ENCODE measurements at regions of chr17 and their contacts with region 1.

Region 1: GRCh38 chr17:63434876-63435684 is 11.0 kb downstream of the CYB561 start:
- DNase-seq: peak in 11 of 14 experiments; percentile 29 to 80 (median 43)
- ATAC-seq: peak; percentile 92
- H3K4me3 ChIP-seq: no peak overlapping the region
- H3K4me3 Mint-ChIP-seq: peak overlapping the region; percentile 60
- H3K27ac ChIP-seq: no peak overlapping the region
- H3K27ac Mint-ChIP-seq: peak overlapping the region; percentile 76
- H3K4me1 ChIP-seq: peaks cover 65% of the 10 kb centered on the region
- H3K4me1 Mint-ChIP-seq: peaks cover 19% of the 10 kb centered on the region
- H3K27me3 ChIP-seq: no peaks in the 10 kb centered on the region
- H3K27me3 Mint-ChIP-seq: no peaks in the 10 kb centered on the region
- CTCF ChIP-seq: no peak

Region 2: GRCh38 chr17:63349478-63350000 is 85.5 kb before region 1 on chr17:
- CTCF ChIA-PET with region 1: no interaction called
- POLR2A ChIA-PET with region 1: no interaction called
- intact Hi-C with region 1: no loop called
- DNase-seq: no peak
- ATAC-seq: no peak
- H3K4me3 ChIP-seq: no peak overlapping the region
- H3K4me3 Mint-ChIP-seq: no peak overlapping the region
- H3K27ac ChIP-seq: no peak overlapping the region
- H3K27ac Mint-ChIP-seq: no peak overlapping the region
- H3K4me1 ChIP-seq: no peaks in the 10 kb centered on the region
- H3K4me1 Mint-ChIP-seq: no peaks in the 10 kb centered on the region
- H3K27me3 ChIP-seq: no peaks in the 10 kb centered on the region
- H3K27me3 Mint-ChIP-seq: no peaks in the 10 kb centered on the region
- CTCF ChIP-seq: no peak

Region 3: DNA sequence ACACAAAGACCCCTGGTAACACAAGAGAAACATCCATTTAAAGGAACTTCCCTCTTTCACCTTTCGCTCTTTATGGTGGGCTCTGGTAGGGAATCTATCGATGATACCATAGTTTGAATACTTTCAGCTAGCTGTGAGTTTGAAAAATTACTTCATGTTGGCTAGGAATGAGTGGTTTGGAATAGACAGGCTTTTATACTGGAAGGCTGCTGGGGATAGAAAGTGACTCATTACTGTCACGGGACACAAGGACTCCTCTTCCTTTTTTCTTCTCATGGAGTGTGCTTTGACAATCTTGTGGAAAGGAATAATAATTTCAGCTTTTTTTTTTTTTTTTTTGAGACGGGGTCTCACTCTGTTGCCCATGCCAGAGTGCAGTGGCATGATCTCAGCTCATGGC is 65.8 kb before region 1 on chr17:
- CTCF ChIA-PET with region 1: no interaction called
- POLR2A ChIA-PET with region 1: no interaction called
- intact Hi-C with region 1: no loop called
- DNase-seq: no peak
- ATAC-seq: no peak
- H3K4me3 ChIP-seq: no peak overlapping the region
- H3K4me3 Mint-ChIP-seq: no peak overlapping the region
- H3K27ac ChIP-seq: no peak overlapping the region
- H3K27ac Mint-ChIP-seq: no peak overlapping the region
- H3K4me1 ChIP-seq: no peaks in the 10 kb centered on the region
- H3K4me1 Mint-ChIP-seq: no peaks in the 10 kb centered on the region
- H3K27me3 ChIP-seq: no peaks in the 10 kb centered on the region
- H3K27me3 Mint-ChIP-seq: no peaks in the 10 kb centered on the region
- CTCF ChIP-seq: no peak

Region 4: GRCh38 chr17:63395075-63395805 is 39.8 kb before region 1 on chr17:
- CTCF ChIA-PET with region 1: no interaction called
- POLR2A ChIA-PET with region 1: no interaction called
- intact Hi-C with region 1: no loop called
- DNase-seq: no peak
- ATAC-seq: no peak
- H3K4me3 ChIP-seq: no peak overlapping the region
- H3K4me3 Mint-ChIP-seq: no peak overlapping the region
- H3K27ac ChIP-seq: no peak overlapping the region
- H3K27ac Mint-ChIP-seq: no peak overlapping the region
- H3K4me1 ChIP-seq: no peaks in the 10 kb centered on the region
- H3K4me1 Mint-ChIP-seq: no peaks in the 10 kb centered on the region
- H3K27me3 ChIP-seq: no peaks in the 10 kb centered on the region
- H3K27me3 Mint-ChIP-seq: no peaks in the 10 kb centered on the region
- CTCF ChIP-seq: no peak

Region 5: GRCh38 chr17:63478791-63479494 is 43.9 kb after region 1 on chr17:
- CTCF ChIA-PET with region 1: interaction called, 10 read pairs
- POLR2A ChIA-PET with region 1: interaction called, 31 read pairs
- intact Hi-C with region 1: loop called in 1 of 2 experiments (anchors 5 kb)
- DNase-seq: peak; percentile 66 to 88 (median 70)
- ATAC-seq: peak; percentile 81
- H3K4me3 ChIP-seq: no peak overlapping the region
- H3K4me3 Mint-ChIP-seq: peak overlapping the region; percentile 64
- H3K27ac ChIP-seq: no peak overlapping the region
- H3K27ac Mint-ChIP-seq: no peak overlapping the region
- H3K4me1 ChIP-seq: peaks cover 26% of the 10 kb centered on the region
- H3K4me1 Mint-ChIP-seq: peaks cover 14% of the 10 kb centered on the region
- H3K27me3 ChIP-seq: peaks cover 10 to 11% of the 10 kb centered on the region in 2 experiments
- H3K27me3 Mint-ChIP-seq: peaks cover 35% of the 10 kb centered on the region
- CTCF ChIP-seq: peak; percentile 61

Region 6: GRCh38 chr17:63490321-63490720 is 55.2 kb after region 1 on chr17:
- CTCF ChIA-PET with region 1: no interaction called
- POLR2A ChIA-PET with region 1: no interaction called
- intact Hi-C with region 1: no loop called
- DNase-seq: no peak
- ATAC-seq: no peak
- H3K4me3 ChIP-seq: no peak overlapping the region
- H3K4me3 Mint-ChIP-seq: no peak overlapping the region
- H3K27ac ChIP-seq: no peak overlapping the region
- H3K27ac Mint-ChIP-seq: no peak overlapping the region
- H3K4me1 ChIP-seq: no peaks in the 10 kb centered on the region
- H3K4me1 Mint-ChIP-seq: no peaks in the 10 kb centered on the region
- H3K27me3 ChIP-seq: no peaks in the 10 kb centered on the region
- H3K27me3 Mint-ChIP-seq: no peaks in the 10 kb centered on the region
- CTCF ChIP-seq: no peak